Common myeloid progenitor, CD34-positive (primary cell): ENCODE measurements at regions of chr7 and their contacts with region 1.

Region 1: GRCh38 chr7:108146070-108146837 is 16.1 kb upstream of the LAMB4 start:
- DNase-seq: peak; percentile 65 to 80 (median 69)
- H3K4me3 ChIP-seq: peak overlapping the region in 3 of 7 experiments; percentile 19 to 60 (median 31)
- H3K27ac ChIP-seq: no peak overlapping the region
- H3K4me1 ChIP-seq: peaks cover 3 to 7% (median 4%) of the 10 kb centered on the region in 4 experiments
- H3K27me3 ChIP-seq: peaks cover 0 to 1% (median 0%) of the 10 kb centered on the region in 5 experiments

Region 2: GRCh38 chr7:108114117-108114841 is 32.0 kb before region 1 on chr7:
- CTCF ChIA-PET with region 1: interaction called, 121 read pairs
- POLR2A ChIA-PET with region 1: no interaction called
- DNase-seq: peak; percentile 25 to 48 (median 47)
- H3K4me3 ChIP-seq: no peak overlapping the region
- H3K27ac ChIP-seq: no peak overlapping the region
- H3K4me1 ChIP-seq: no peaks in the 10 kb centered on the region
- H3K27me3 ChIP-seq: no peaks in the 10 kb centered on the region

Region 3: GRCh38 chr7:108120933-108121332 is 25.3 kb before region 1 on chr7:
- CTCF ChIA-PET with region 1: interaction called, 27 read pairs
- POLR2A ChIA-PET with region 1: no interaction called
- DNase-seq: no peak
- H3K4me3 ChIP-seq: no peak overlapping the region
- H3K27ac ChIP-seq: no peak overlapping the region
- H3K4me1 ChIP-seq: no peaks in the 10 kb centered on the region
- H3K27me3 ChIP-seq: no peaks in the 10 kb centered on the region

Region 4: GRCh38 chr7:108129018-108129965 is 17.0 kb before region 1 on chr7:
- CTCF ChIA-PET with region 1: interaction called, 16 read pairs
- POLR2A ChIA-PET with region 1: no interaction called
- DNase-seq: no peak
- H3K4me3 ChIP-seq: no peak overlapping the region
- H3K27ac ChIP-seq: no peak overlapping the region
- H3K4me1 ChIP-seq: peaks cover 0 to 13% (median under 1%) of the 10 kb centered on the region in 4 experiments
- H3K27me3 ChIP-seq: no peaks in the 10 kb centered on the region

Region 5: DNA sequence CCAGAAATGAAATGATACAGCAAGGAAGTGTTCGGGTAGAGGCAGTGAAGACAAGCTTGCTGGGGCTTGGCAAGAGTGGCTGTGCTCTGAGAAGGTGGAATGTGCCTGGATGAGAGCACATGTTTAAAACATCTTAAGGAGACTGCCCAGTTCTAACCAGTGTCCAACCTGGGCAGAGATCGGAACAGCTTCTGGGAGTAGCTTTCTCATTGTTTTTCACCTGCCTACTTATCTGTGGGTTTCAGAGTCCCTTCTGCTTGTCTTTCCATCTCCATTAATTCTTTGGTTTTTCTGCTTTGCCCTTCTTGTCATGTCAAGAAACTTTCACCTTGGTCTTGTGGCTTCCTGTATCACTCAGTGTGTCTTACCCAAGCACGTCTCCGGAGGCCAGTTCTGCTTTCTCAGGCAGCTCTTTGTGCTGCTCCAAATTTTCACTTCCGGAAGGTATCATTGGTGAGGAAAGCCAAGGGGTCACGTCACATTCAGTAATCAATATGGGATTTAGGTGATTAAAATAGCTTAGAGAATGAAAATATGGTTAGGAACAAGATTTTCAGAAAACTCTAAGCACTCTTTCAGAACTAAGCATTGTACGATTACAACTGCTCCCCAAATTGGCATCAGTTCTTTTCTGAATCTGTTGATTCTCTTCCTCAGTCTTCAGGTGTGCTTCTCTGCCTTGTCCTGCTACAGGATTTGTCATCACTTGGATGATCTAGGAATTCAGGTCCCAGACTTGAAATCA is 10.6 kb before region 1 on chr7:
- CTCF ChIA-PET with region 1: interaction called, 16 read pairs
- POLR2A ChIA-PET with region 1: no interaction called
- DNase-seq: peak; percentile 54 to 93 (median 89)
- H3K4me3 ChIP-seq: peak overlapping the region in 2 of 7 experiments; percentile 14 to 29
- H3K27ac ChIP-seq: peak overlapping the region; percentile 41 to 54
- H3K4me1 ChIP-seq: peaks cover 16 to 52% (median 20%) of the 10 kb centered on the region in 4 experiments
- H3K27me3 ChIP-seq: no peaks in the 10 kb centered on the region

Region 6: GRCh38 chr7:108164342-108164741 is 18.1 kb after region 1 on chr7:
- CTCF ChIA-PET with region 1: no interaction called
- POLR2A ChIA-PET with region 1: no interaction called
- DNase-seq: no peak
- H3K4me3 ChIP-seq: no peak overlapping the region
- H3K27ac ChIP-seq: no peak overlapping the region
- H3K4me1 ChIP-seq: no peaks in the 10 kb centered on the region
- H3K27me3 ChIP-seq: peaks cover 0 to 3% (median 0%) of the 10 kb centered on the region in 5 experiments

Region 7: DNA sequence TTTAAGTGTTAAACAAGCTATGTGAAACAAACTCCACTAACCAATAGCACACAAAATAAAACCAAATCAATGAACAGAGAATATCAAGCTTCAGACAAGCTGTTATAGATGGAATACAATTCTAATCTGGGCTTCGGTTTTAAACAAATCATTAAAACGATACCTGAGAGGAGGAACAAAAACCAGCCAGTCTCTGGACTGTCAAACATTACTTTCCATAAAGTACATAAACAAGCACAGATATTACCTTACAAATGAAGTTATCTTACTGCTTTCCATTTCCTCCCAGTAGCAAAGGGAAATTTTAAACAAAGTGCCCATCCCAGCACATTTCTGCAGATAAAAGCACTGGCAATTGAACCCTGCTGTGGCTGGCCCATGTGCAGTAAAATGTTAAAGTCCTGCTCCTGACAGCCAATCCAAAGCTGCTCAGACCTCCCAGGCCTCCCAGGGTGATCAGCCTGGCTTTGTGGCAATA is 182.0 kb after region 1 on chr7:
- CTCF ChIA-PET with region 1: no interaction called
- POLR2A ChIA-PET with region 1: no interaction called
- DNase-seq: peak in 1 of 3 donors; percentile 12
- H3K4me3 ChIP-seq: no peak overlapping the region
- H3K27ac ChIP-seq: no peak overlapping the region
- H3K4me1 ChIP-seq: peaks cover 0 to 10% (median 0%) of the 10 kb centered on the region in 4 experiments
- H3K27me3 ChIP-seq: peaks cover 0 to 3% (median 0%) of the 10 kb centered on the region in 5 experiments